OCI-LY7 (cell line): ENCODE measurements at regions of chr10 and their contacts with region 1.

Region 1: GRCh38 chr10:52390388-52390787 is 76.3 kb downstream of the DKK1 start:
- DNase-seq: no peak
- H3K4me3 ChIP-seq: no peak overlapping the region
- H3K27ac ChIP-seq: no peak overlapping the region
- H3K4me1 ChIP-seq: no peaks in the 10 kb centered on the region
- CTCF ChIP-seq: no peak

Region 2: GRCh38 chr10:52334595-52334994 is 55.8 kb before region 1 on chr10:
- CTCF ChIA-PET with region 1: no interaction called
- POLR2A ChIA-PET with region 1: no interaction called
- intact Hi-C with region 1: no loop called
- DNase-seq: no peak
- H3K4me3 ChIP-seq: no peak overlapping the region
- H3K27ac ChIP-seq: no peak overlapping the region
- H3K4me1 ChIP-seq: no peaks in the 10 kb centered on the region
- CTCF ChIP-seq: no peak

Region 3: DNA sequence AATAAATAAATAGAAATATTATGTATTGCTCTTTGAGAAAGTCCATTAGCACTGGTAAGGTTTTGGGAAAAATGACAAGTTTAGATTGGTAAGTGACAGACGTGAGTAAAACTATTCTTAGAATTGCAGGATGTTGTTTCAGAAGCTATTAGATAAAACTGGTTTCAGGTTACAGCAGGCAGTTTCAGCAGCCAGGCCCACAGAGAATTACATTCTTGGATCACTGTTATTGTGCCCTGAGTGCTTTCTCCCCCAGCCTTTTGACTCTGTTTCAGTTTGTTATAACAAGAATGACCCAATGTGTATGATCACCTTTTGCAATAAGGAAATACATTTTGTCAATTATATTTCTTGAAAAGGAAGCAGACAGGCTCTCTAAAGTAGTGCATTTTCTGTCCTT is 10.2 kb after region 1 on chr10:
- CTCF ChIA-PET with region 1: no interaction called
- POLR2A ChIA-PET with region 1: interaction called, 10 read pairs
- intact Hi-C with region 1: no loop called
- DNase-seq: no peak
- H3K4me3 ChIP-seq: no peak overlapping the region
- H3K27ac ChIP-seq: no peak overlapping the region
- H3K4me1 ChIP-seq: no peaks in the 10 kb centered on the region
- CTCF ChIP-seq: no peak